Left colon (tissue), 2 donors: ENCODE measurements at regions of chr7 and their contacts with region 1.

Region 1: DNA sequence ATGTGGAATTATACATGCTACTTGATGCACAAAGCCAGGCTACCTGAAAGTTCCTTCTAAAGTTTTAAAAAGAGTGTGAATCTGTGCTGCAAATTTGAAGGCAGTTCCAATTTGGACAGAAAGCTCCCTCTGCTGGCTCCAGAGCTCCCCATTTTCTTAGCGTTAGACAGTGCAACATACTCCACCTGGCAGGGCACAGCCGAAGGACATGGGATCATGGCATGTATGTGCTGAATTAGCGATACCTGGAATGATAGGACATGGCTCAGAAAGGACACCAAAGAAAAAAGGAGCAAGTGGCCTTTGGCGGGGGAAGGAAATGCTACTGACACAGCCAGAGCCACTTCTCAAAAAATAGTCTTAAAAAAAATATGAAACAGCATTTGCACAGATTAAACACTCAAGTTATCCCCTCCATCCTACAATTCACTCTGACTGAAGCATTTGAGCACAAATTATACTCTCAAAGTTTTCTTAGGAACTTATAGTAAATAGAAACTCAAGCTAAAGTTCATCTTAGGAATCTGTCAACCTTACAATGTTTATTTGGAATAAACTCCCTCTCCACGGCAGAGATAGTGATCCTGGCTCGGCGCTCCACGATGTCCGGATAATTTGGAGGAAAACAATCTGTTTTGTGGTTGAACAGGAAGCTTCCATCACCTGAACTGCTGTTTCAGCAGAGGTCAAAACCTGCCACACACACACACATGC is 80.0 kb downstream of the C7orf25 start:
- DNase-seq: peak in 1 of 2 donors; percentile 32
- ATAC-seq: peak; percentile 44

Region 2: GRCh38 chr7:41940760-41941343 is 891.0 kb before region 1 on chr7:
- intact Hi-C with region 1: loop called in 1 of 2 experiments (anchors 5 kb)
- DNase-seq: peak; percentile 58 to 65
- ATAC-seq: peak; percentile 65

Region 3: GRCh38 chr7:42493436-42494238 is 338.2 kb before region 1 on chr7:
- intact Hi-C with region 1: no loop called
- DNase-seq: peak; percentile 51 to 62
- ATAC-seq: peak; percentile 55